ENCODE measurements at regions of chr2 and their contacts with region 1.

Region 1: DNA sequence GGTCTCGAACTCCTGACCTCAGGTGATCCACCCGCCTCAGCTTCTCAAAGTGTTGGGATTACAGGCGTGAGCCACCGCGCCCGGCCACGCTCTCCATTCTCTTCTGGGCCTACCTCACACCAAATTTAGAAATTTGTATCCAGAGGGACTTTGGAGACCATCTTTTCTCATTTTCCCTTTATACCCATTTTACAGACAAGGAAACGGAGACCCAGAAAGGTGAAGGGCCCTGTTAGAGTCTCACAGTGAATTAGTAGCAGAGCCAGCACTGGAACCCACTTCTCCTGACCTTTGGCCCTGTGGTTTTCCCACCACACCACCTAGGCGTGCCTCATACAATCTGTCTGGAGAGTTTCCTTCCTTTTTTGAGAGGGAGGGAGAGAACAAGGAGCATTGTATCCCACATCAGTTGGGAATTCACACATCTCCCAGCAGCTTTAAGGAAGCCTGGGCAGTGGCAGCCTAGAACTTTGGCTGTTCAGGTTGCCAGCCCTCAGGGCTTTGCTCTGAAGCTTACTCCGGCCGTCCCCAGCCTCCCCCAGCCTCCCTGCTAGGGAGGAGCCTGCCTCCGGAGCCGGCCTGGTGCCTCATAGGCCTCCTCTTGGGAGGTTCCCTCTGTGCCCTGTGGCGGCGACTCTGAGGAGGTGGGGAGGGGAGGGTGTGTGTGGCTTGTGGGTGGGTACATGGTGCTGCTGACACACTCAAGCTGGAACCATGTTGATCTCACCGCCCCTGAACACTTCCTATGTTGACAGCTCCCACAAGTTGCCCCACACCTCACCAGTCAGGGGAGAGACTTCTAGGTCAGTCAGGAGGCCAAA is 13.8 kb downstream of the FOSL2 start:
- DNase-seq: peak in 34 of 35 experiments; percentile 54 to 85 (median 71)
- ATAC-seq: peak in 3 of 4 experiments; percentile 25 to 46 (median 28)
- H3K4me3 ChIP-seq: no peak overlapping the region
- H3K4me3 Mint-ChIP-seq: peak overlapping the region in 1 of 3 donors; percentile 69
- H3K27ac ChIP-seq: peak overlapping the region; percentile 91
- H3K27ac Mint-ChIP-seq: peak overlapping the region; percentile 80 to 83
- H3K4me1 ChIP-seq: peaks cover 20 to 91% of the 10 kb centered on the region in 2 experiments
- H3K4me1 Mint-ChIP-seq: peaks cover 68 to 84% (median 78%) of the 10 kb centered on the region in 3 donors
- H3K27me3 ChIP-seq: no peaks in the 10 kb centered on the region
- H3K27me3 Mint-ChIP-seq: no peaks in the 10 kb centered on the region

Region 2: DNA sequence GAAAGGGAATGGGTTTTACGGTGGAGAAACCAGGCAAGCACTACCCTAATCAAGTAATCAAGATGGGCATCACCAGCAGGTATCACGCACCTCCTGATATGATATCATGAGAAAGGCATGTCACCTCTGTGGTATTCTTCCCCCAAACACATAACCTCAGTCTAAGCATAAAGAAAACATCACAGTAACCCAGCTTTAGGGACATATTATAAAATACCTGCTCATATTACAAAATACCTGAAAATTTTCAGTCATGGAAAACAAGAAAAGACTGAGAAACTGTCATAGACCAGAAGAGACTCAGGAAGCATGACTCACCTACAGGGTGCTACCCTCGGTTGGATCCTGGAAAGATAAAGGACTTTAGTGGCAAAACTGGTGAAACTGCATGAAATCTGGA is 879.3 kb before region 1 on chr2:
- CTCF ChIA-PET with region 1: no interaction called
- POLR2A ChIA-PET with region 1: interaction called in 1 of 2 experiments, 10 read pairs
- DNase-seq: no peak
- ATAC-seq: no peak
- H3K4me3 ChIP-seq: no peak overlapping the region
- H3K4me3 Mint-ChIP-seq: no peak overlapping the region
- H3K27ac ChIP-seq: no peak overlapping the region
- H3K27ac Mint-ChIP-seq: no peak overlapping the region
- H3K4me1 ChIP-seq: no peaks in the 10 kb centered on the region
- H3K4me1 Mint-ChIP-seq: no peaks in the 10 kb centered on the region
- H3K27me3 ChIP-seq: peaks cover 0 to 12% of the 10 kb centered on the region in 2 experiments
- H3K27me3 Mint-ChIP-seq: peaks cover 30 to 37% of the 10 kb centered on the region in 2 donors

Region 3: GRCh38 chr2:28047681-28048080 is 358.8 kb before region 1 on chr2:
- CTCF ChIA-PET with region 1: no interaction called
- POLR2A ChIA-PET with region 1: no interaction called
- DNase-seq: no peak
- ATAC-seq: no peak
- H3K4me3 ChIP-seq: no peak overlapping the region
- H3K4me3 Mint-ChIP-seq: no peak overlapping the region
- H3K27ac ChIP-seq: no peak overlapping the region
- H3K27ac Mint-ChIP-seq: no peak overlapping the region
- H3K4me1 ChIP-seq: no peaks in the 10 kb centered on the region
- H3K4me1 Mint-ChIP-seq: no peaks in the 10 kb centered on the region
- H3K27me3 ChIP-seq: no peaks in the 10 kb centered on the region
- H3K27me3 Mint-ChIP-seq: no peaks in the 10 kb centered on the region

Region 4: DNA sequence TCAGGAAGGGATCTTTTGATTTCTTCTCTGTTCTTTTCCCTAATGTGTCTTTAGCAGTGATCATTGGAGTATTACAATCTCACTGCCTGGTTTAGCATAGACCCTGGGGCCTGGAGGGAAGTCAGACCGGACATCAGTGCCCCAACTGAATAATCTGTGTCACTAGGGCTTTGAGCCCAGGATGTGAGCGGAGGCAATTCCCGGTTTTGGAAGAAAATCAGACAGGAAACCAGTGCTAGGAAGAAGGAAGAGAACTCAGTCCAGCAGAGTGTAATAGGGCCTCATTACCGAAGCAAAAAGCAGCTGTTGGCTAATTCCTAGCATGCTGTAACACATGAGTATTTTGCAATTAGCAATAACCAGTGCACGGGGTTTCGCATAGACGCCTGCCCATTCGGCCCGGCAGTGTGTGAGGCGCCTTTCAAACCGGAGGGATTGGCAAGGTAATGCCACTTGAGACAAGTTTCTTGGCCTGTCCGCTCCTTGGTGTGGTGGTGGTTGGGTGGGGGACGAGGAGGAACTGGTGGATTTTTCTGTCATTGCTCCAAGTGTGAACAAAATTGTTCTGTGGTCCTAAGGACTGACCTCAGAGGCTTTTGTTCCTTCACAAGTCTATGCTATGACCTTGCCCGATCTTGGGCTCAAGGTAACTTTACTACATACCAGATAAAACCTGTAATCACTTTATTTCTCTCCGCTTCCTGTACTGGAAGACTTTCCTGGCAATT is 11.0 kb before region 1 on chr2:
- CTCF ChIA-PET with region 1: interaction called in 1 of 2 experiments, 4 read pairs
- POLR2A ChIA-PET with region 1: interaction called, 3 to 19 read pairs
- DNase-seq: no peak
- ATAC-seq: no peak
- H3K4me3 ChIP-seq: peak overlapping the region; percentile 23 to 70
- H3K4me3 Mint-ChIP-seq: no peak overlapping the region
- H3K27ac ChIP-seq: peak overlapping the region; percentile 66
- H3K27ac Mint-ChIP-seq: no peak overlapping the region
- H3K4me1 ChIP-seq: peaks cover 18 to 42% of the 10 kb centered on the region in 2 experiments
- H3K4me1 Mint-ChIP-seq: peaks cover 15 to 31% (median 18%) of the 10 kb centered on the region in 3 donors
- H3K27me3 ChIP-seq: no peaks in the 10 kb centered on the region
- H3K27me3 Mint-ChIP-seq: no peaks in the 10 kb centered on the region

Region 5: DNA sequence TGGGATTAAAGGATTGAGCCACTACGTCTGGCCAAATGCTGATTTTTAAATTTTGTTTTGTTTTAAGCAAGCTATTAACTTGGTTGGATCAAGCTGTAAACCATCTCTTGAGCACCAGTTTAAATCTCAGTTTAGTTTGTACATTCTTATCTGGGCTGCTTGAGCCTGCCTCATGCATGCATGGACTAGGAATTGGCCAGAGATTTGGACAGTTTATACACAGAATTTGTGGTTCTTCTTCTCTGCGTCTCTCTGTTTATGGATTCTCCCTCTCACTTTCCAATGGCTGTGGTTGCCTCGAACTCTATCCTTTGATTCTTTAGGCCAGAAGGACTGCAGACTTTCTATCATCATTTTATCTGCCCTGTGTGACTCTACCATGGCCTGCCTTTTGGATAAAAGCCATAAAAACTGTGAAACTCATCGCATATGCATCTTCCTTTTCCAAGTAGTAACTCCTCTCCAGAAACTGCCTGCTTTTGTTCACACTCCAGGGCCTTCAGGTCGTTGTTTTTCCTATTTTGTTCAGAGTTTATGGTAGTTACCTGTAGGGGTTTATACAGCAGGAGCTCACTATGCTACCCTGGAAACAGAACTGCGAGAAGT is 56.8 kb after region 1 on chr2:
- CTCF ChIA-PET with region 1: no interaction called
- POLR2A ChIA-PET with region 1: no interaction called
- DNase-seq: no peak
- ATAC-seq: no peak
- H3K4me3 ChIP-seq: no peak overlapping the region
- H3K4me3 Mint-ChIP-seq: no peak overlapping the region
- H3K27ac ChIP-seq: no peak overlapping the region
- H3K27ac Mint-ChIP-seq: no peak overlapping the region
- H3K4me1 ChIP-seq: peaks cover 0 to 2% of the 10 kb centered on the region in 2 experiments
- H3K4me1 Mint-ChIP-seq: peaks cover 0 to 5% (median 0%) of the 10 kb centered on the region in 3 donors
- H3K27me3 ChIP-seq: no peaks in the 10 kb centered on the region
- H3K27me3 Mint-ChIP-seq: peaks cover 2 to 4% of the 10 kb centered on the region in 2 donors